ENCODE measurements at regions of chr6 and their contacts with region 1.

Region 1: GRCh38 chr6:10269814-10270472 is 144.9 kb downstream of the TFAP2A start:
- DNase-seq: peak; percentile 53
- H3K4me3 ChIP-seq: no peak overlapping the region
- H3K27ac ChIP-seq: no peak overlapping the region
- H3K4me1 ChIP-seq: peaks cover 19% of the 10 kb centered on the region
- H3K27me3 ChIP-seq: no peaks in the 10 kb centered on the region
- CTCF ChIP-seq: no peak

Region 2: GRCh38 chr6:10194816-10195639 is 74.9 kb before region 1 on chr6:
- CTCF ChIA-PET with region 1: no interaction called
- dilution Hi-C with region 1: loop called (anchors 5 kb)
- in situ Hi-C with region 1: no loop called
- intact Hi-C with region 1: no loop called
- DNase-seq: peak; percentile 13
- H3K4me3 ChIP-seq: no peak overlapping the region
- H3K27ac ChIP-seq: no peak overlapping the region
- H3K4me1 ChIP-seq: peaks cover 11% of the 10 kb centered on the region
- H3K27me3 ChIP-seq: no peaks in the 10 kb centered on the region
- CTCF ChIP-seq: no peak

Region 3: DNA sequence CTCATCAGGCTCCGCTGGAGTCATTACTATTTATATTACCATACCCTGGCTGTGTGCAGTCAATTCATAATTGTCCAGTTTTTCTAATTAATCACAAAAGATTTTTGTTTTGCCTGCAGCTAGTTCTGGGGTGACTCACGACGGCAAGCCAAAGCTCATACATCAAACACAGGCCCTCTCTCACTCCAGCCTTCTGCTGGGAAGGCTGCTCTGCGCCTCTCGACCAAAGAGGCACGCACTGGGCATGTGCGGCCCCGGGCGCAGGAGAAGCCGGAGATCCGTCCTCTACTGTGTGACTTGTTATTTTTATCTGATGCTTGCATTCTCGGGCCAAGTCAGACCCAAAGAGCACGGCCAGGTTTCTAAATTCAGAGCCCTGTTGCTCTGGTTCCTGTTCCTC is 46.4 kb after region 1 on chr6:
- CTCF ChIA-PET with region 1: no interaction called
- dilution Hi-C with region 1: loop called (anchors 5 kb)
- in situ Hi-C with region 1: no loop called
- intact Hi-C with region 1: no loop called
- DNase-seq: peak; percentile 95
- H3K4me3 ChIP-seq: peak overlapping the region in 1 of 3 experiments; percentile 26
- H3K27ac ChIP-seq: peak overlapping the region; percentile 57
- H3K4me1 ChIP-seq: peaks cover 13% of the 10 kb centered on the region
- H3K27me3 ChIP-seq: no peaks in the 10 kb centered on the region
- CTCF ChIP-seq: no peak

Region 4: GRCh38 chr6:10332121-10332520 is 62.2 kb after region 1 on chr6:
- CTCF ChIA-PET with region 1: no interaction called
- dilution Hi-C with region 1: no loop called
- in situ Hi-C with region 1: no loop called
- intact Hi-C with region 1: no loop called
- DNase-seq: no peak
- H3K4me3 ChIP-seq: no peak overlapping the region
- H3K27ac ChIP-seq: no peak overlapping the region
- H3K4me1 ChIP-seq: peaks cover 4% of the 10 kb centered on the region
- H3K27me3 ChIP-seq: no peaks in the 10 kb centered on the region
- CTCF ChIP-seq: no peak